ENCODE measurements at regions of chr12 and their contacts with region 1.

Region 1: DNA sequence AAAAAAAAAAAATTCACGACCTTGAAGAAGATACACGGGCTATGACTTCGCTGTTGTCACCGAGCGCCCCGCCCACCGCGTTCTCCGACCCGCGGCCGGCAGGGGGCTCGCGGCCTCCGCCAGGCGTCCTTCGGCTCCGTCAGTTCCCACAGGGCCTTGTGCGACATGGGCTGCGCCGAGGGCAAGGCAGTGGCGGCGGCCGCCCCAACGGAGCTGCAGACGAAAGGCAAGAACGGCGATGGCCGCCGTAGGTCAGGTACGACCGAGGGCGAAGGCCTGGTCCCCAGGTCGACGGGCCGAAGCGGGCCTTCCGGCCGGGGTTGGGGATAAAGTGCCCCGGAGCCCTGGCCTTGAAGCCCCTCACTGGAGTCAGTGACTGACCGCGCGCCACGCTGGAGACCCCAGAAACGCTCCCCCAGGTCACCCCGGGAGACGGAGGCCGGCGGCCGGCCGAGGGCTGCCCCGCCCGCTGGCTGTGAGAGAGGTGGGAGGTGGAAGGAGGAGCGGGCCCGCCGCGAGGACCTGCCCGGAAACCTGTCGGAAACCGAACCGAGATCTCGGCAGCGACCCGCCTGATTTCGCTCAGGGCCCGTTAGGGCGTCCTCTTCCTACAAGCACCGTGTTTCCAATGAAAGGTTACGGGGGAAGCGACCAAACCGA is at the start of gene TXNRD1:
- DNase-seq: peak; percentile 86
- H3K4me3 ChIP-seq: peak within 1 kb of the TSS; percentile 34 to 67 (median 58)
- H3K27ac ChIP-seq: peak within 1 kb of the TSS; percentile 69 to 80 (median 73)
- H3K4me1 ChIP-seq: peaks cover 10 to 31% (median 18%) of the 10 kb centered on the region in 4 donors
- H3K27me3 ChIP-seq: no peaks in the 10 kb centered on the region
- CTCF ChIP-seq: peak; percentile 76 to 92 (median 88)
- EP300 ChIP-seq: no peak
- POLR2A ChIP-seq: no peak
- total RNA-seq, gene TXNRD1: 72.9 to 127 (median 122) TPM

Region 2: GRCh38 chr12:104286538-104287482 is 71.0 kb after region 1 on chr12:
- in situ Hi-C with region 1: loop called in 1 of 4 experiments (anchors 10 kb)
- intact Hi-C with region 1: loop called (anchors 5 kb)
- DNase-seq: peak; percentile 96
- H3K4me3 ChIP-seq: peak overlapping the region; percentile 55 to 75 (median 68)
- H3K27ac ChIP-seq: peak overlapping the region; percentile 94 to 97 (median 96)
- H3K4me1 ChIP-seq: peaks cover 18 to 39% (median 28%) of the 10 kb centered on the region in 4 donors
- H3K27me3 ChIP-seq: no peaks in the 10 kb centered on the region
- CTCF ChIP-seq: peak in 1 of 5 experiments; percentile 11
- EP300 ChIP-seq: no peak
- POLR2A ChIP-seq: peak; percentile 91

Region 3: DNA sequence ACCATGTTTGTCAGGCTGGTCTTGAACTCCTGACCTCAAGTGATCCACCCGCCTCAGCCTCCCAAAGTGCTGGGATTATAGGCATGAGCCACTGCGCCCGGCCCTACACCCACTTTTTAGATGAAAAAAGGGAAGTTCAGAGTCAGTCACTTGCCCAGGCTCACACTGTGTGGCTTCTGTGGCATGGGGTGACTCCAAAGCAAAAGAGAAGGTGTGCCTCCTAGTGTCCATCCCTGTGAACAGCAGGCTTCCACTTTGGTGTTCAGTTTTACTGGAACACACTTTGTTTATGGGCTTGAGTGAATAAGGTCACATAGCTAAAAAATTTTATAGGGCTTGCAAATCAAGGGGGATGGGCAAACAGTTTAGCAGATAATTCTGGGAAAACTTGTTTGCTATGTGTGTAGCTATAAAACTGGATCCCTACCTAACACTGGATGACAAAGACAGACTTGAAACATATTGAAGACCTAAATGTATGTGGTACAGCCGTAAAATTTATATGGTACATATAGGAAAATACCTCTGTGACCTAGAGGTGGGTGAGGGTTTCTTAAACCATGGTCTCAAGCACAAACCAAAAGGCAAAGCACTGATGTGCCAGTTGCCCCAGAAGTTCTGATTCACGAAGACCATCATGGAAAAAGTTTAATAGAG is 142.7 kb after region 1 on chr12:
- in situ Hi-C with region 1: no loop called
- intact Hi-C with region 1: loop called (anchors 5 kb)
- DNase-seq: peak; percentile 69
- H3K4me3 ChIP-seq: no peak overlapping the region
- H3K27ac ChIP-seq: no peak overlapping the region
- H3K4me1 ChIP-seq: no peaks in the 10 kb centered on the region
- H3K27me3 ChIP-seq: no peaks in the 10 kb centered on the region
- CTCF ChIP-seq: peak; percentile 87 to 92 (median 89)
- EP300 ChIP-seq: no peak
- POLR2A ChIP-seq: no peak

Region 4: GRCh38 chr12:104865080-104865479 is 649.3 kb after region 1 on chr12:
- in situ Hi-C with region 1: loop called in 1 of 4 experiments (anchors 25 kb)
- intact Hi-C with region 1: no loop called
- DNase-seq: no peak
- H3K4me3 ChIP-seq: no peak overlapping the region
- H3K27ac ChIP-seq: no peak overlapping the region
- H3K4me1 ChIP-seq: peaks cover 0 to 7% (median 0%) of the 10 kb centered on the region in 4 donors
- H3K27me3 ChIP-seq: no peaks in the 10 kb centered on the region
- CTCF ChIP-seq: no peak
- EP300 ChIP-seq: no peak
- POLR2A ChIP-seq: no peak

Region 5: DNA sequence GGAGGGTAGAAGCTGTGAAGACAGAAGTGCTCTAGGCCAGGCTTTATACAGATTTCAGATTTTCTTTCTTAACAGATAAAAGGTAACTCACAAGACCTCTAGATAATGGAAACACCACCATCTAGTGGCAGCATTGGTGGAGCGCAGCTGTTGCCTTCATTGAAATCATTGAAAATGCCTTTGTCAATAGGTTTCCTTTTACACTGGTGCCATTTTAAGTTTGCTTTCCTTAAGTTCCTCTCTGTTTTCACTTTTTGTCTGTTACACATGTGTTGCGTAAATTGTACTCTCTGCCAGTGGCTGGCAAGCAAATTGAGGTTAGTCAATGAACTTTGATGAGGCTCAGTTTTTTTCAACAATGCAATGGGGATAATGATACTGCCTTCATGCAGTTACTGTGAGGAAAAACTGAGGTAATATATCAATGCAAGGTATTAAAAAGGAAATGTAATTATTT is 837.4 kb after region 1 on chr12:
- in situ Hi-C with region 1: loop called in 2 of 4 experiments (anchors 25 kb)
- intact Hi-C with region 1: no loop called
- DNase-seq: peak; percentile 82
- H3K4me3 ChIP-seq: no peak overlapping the region
- H3K27ac ChIP-seq: no peak overlapping the region
- H3K4me1 ChIP-seq: peaks cover 0 to 3% (median 0%) of the 10 kb centered on the region in 4 donors
- H3K27me3 ChIP-seq: no peaks in the 10 kb centered on the region
- CTCF ChIP-seq: peak; percentile 85 to 94 (median 91)
- EP300 ChIP-seq: no peak
- POLR2A ChIP-seq: no peak

Region 6: GRCh38 chr12:105382771-105383622 is 1167.2 kb after region 1 on chr12:
- in situ Hi-C with region 1: loop called in 1 of 4 experiments (anchors 25 kb)
- intact Hi-C with region 1: no loop called
- DNase-seq: no peak
- H3K4me3 ChIP-seq: peak overlapping the region in 2 of 4 donors; percentile 3 to 6
- H3K27ac ChIP-seq: no peak overlapping the region
- H3K4me1 ChIP-seq: peaks cover 0 to 9% (median 5%) of the 10 kb centered on the region in 4 donors
- H3K27me3 ChIP-seq: no peaks in the 10 kb centered on the region
- CTCF ChIP-seq: peak; percentile 73 to 87 (median 84)
- EP300 ChIP-seq: no peak
- POLR2A ChIP-seq: no peak

Measured in transverse colon (tissue), 4 donors.